ENCODE measurements at regions of chr20 and their contacts with region 1.

Region 1: GRCh38 chr20:31595654-31596411 is 9.3 kb upstream of the ID1 start:
- DNase-seq: peak; percentile 57
- ATAC-seq: peak; percentile 61
- H3K4me3 ChIP-seq: peak overlapping the region; percentile 51 to 58
- H3K27ac ChIP-seq: peak overlapping the region; percentile 98
- H3K4me1 ChIP-seq: peaks cover 61 to 80% of the 10 kb centered on the region in 2 experiments
- H3K27me3 ChIP-seq: no peaks in the 10 kb centered on the region
- CTCF ChIP-seq: no peak
- POLR2A ChIP-seq: peak; percentile 53
- RAD21 ChIP-seq: no peak

Region 2: DNA sequence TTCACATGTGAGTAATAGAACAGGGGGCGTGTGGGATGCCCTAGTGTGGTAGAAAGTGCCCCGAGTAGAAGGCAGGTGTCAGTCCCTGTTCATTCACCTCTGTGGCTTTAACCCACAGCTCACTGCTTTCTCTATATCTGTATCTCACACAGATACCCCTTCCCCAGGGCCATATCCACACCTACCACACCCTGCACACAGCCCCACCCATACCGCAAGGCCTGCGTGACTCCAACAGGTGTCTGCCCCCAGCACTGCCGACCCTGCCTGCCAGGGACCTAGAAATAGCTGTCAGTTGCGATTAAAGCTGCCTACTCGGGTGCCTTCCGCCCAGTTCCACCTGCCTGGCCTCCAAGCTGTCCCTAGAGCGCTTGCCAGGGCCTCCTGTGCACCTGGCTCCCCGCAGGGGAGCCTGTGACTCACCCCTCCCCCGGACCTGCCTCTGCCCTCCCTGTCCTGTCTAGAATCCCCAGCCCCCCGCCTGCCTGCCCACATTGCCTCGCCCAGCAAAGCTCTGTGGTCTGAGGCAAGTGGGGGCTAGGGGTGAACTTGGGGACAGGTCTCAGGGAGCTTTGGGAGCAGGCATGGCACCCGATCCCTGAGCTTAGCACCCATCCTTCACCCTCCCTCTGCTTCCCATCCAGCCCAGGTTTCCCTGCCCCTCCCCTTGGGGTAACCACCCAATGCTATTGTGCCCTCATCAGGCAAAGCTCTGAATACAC is 29.0 kb before region 1 on chr20:
- CTCF ChIA-PET with region 1: interaction called, 17 read pairs
- POLR2A ChIA-PET with region 1: interaction called, 1,106 read pairs
- RAD21 ChIA-PET with region 1: interaction called, 3 to 6 read pairs
- intact Hi-C with region 1: no loop called
- DNase-seq: peak; percentile 75
- ATAC-seq: peak; percentile 70
- H3K4me3 ChIP-seq: peak overlapping the region; percentile 4 to 15; a peak in 2 of 4 replicates
- H3K27ac ChIP-seq: peak overlapping the region; percentile 98
- H3K4me1 ChIP-seq: peaks cover 95 to 98% of the 10 kb centered on the region in 2 experiments
- H3K27me3 ChIP-seq: no peaks in the 10 kb centered on the region
- CTCF ChIP-seq: peak in 2 of 3 experiments; percentile 15 to 25; a peak in 2 of 6 replicates
- POLR2A ChIP-seq: no peak
- RAD21 ChIP-seq: no peak

Region 3: DNA sequence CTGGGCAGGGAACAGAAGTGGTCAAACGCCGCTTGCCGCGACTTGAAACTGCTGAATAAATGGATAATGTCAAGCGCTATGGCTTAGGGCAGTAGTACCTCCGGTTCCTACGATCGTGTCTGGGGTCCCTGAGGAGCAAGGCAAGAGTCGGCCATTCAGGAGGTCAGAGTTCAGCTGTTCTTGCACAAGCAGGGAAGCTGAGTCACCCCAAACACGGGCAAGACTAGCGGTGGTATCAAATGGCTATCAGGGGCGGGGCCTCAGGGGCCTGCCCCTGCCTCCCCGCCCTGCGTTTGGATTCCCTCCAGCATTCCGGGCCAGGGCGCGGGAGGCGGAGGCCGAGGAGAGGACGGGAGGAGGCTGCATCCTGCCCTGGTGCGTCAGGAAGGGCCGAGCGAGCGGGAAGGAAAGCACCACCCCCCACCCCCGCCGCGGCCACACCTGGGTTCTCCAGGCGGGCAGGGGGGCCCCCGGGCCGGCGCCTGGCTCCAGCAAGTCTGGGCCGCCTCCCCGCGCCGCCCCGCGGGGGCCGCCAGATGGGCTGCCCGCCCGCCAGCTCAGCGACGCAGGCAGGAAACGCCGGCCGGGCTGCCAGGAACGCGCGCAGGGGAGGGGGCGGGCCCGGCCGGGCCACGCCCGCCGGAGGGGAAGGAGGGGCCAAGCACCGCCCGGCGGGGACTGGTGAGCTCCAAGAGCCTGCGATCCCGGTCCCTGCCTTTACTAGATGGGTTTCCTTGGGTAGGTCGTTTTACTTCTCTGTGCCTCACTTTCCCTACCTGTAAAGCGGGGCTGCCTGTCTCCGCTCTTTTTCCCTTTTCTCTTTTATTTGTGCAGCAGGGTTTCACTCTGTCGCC is 22.9 kb before region 1 on chr20:
- CTCF ChIA-PET with region 1: interaction called, 17 read pairs
- POLR2A ChIA-PET with region 1: interaction called, 1,106 read pairs
- RAD21 ChIA-PET with region 1: interaction called, 6 to 12 read pairs
- intact Hi-C with region 1: loop called (anchors 1 kb)
- DNase-seq: peak; percentile 96
- ATAC-seq: peak; percentile 72
- H3K4me3 ChIP-seq: peak overlapping the region; percentile 54 to 61
- H3K27ac ChIP-seq: peak overlapping the region; percentile 98
- H3K4me1 ChIP-seq: peaks cover 73 to 79% of the 10 kb centered on the region in 2 experiments
- H3K27me3 ChIP-seq: no peaks in the 10 kb centered on the region
- CTCF ChIP-seq: no peak
- POLR2A ChIP-seq: peak; percentile 59
- RAD21 ChIP-seq: no peak

Region 4: DNA sequence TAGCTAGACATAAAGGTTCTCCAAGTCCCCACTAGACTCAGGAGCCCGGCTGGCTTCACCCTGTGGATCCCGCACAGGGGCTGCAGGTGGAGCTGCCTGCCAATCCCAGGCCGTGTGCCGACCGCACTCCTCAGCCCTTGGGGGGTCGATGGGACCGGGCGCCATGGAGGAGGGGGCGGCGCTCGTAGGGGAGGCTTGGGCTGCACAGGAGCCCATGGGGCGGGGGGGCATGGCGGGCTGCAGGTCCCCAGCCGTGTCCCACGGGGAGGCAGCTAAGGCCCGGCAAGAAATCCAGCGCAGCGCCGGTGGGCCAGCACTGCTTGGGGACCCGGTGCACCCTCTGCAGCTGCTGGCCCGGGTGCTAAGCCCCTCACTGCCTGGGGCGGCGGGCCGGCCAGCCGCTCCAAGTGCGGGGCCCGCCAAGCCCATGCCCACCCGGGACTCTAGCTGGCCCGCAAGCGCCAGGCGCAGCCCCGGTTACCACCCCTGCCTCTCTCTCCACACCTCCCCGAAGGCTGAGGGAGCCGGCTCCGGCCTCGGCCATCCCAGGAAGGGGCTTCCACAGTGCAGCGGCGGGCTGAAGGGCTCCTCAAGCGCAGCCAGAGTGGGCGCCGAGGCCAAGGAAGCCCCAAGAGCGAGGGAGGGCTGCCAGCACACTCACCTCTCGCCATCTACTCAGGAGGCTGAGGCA is 17.2 kb before region 1 on chr20:
- CTCF ChIA-PET with region 1: interaction called, 11 read pairs
- POLR2A ChIA-PET with region 1: interaction called, 1,106 read pairs
- RAD21 ChIA-PET with region 1: interaction called, 6 to 12 read pairs
- intact Hi-C with region 1: loop called (anchors 1 kb)
- DNase-seq: no peak
- ATAC-seq: no peak
- H3K4me3 ChIP-seq: no peak overlapping the region
- H3K27ac ChIP-seq: no peak overlapping the region
- H3K4me1 ChIP-seq: peaks cover 27 to 33% of the 10 kb centered on the region in 2 experiments
- H3K27me3 ChIP-seq: no peaks in the 10 kb centered on the region
- CTCF ChIP-seq: no peak
- POLR2A ChIP-seq: no peak
- RAD21 ChIP-seq: no peak

Measured in HCT116 (cell line).